ENCODE measurements at regions of chr5 and their contacts with region 1.

Region 1: DNA sequence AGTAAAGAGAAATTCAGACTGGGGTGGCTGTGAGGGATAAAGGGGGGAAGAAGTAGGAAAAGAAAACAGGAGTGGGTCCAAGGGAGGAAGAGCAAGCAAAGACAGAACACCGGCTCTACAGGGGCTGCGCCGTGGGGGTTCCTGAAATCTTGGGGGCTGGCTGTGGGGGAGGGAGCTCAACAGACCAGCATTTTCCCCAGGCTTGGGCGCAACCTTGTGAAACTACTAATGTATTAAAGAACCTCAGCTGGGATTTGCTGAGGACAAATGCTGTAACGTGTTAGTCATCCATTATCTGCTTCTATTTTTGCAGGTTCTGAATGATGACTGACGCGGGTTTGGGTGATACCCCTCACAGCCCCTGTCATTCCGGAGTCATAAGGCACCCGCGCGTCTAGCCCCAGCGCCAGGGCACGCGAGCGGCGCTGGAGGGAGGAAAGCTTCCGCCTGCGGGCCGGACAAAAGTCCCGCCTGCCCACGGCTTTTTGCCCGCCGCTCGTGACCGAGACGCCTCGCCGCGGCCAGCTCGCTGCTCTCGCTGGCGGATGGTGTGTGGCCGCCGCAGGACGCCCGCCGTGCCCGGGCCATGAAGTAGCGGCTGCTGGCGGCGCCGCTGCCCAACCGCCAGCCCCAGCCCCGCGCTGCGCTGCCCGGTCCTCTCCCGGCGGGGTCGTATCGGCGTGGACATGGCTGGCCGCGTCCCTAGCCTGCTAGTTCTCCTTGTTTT is 110.6 kb downstream of the PAM start:
- DNase-seq: peak; percentile 82 to 90 (median 87)
- ATAC-seq: peak; percentile 90 to 97 (median 96)
- H3K4me3 ChIP-seq: peak overlapping the region; percentile 45 to 85 (median 74)
- H3K27ac ChIP-seq: peak overlapping the region; percentile 85 to 95 (median 93)
- H3K4me1 ChIP-seq: peaks cover 0 to 57% (median 20%) of the 10 kb centered on the region in 12 donors
- H3K27me3 ChIP-seq: no peaks in the 10 kb centered on the region
- CTCF ChIP-seq: peak in 1 of 12 donors; percentile 4
- POLR2A ChIP-seq: peak in 1 of 2 donors; percentile 90

Region 2: GRCh38 chr5:102754767-102755431 is 110.8 kb before region 1 on chr5 and contains the start of gene PAM:
- intact Hi-C with region 1: loop called in 1 of 10 experiments (anchors 10 kb)
- DNase-seq: peak; percentile 85 to 92 (median 87)
- ATAC-seq: peak; percentile 85 to 95 (median 94)
- H3K4me3 ChIP-seq: peak within 1 kb of the TSS; percentile 56 to 97 (median 82)
- H3K27ac ChIP-seq: peak within 1 kb of the TSS; percentile 47 to 94 (median 85)
- H3K4me1 ChIP-seq: peaks cover 0 to 44% (median 25%) of the 10 kb centered on the region in 12 donors
- H3K27me3 ChIP-seq: no peaks in the 10 kb centered on the region
- CTCF ChIP-seq: peak in 1 of 12 donors; percentile 9
- POLR2A ChIP-seq: peak in 1 of 2 donors; percentile 53
- total RNA-seq, gene PAM: 578 to 1,548 (median 1,139) TPM

Region 3: DNA sequence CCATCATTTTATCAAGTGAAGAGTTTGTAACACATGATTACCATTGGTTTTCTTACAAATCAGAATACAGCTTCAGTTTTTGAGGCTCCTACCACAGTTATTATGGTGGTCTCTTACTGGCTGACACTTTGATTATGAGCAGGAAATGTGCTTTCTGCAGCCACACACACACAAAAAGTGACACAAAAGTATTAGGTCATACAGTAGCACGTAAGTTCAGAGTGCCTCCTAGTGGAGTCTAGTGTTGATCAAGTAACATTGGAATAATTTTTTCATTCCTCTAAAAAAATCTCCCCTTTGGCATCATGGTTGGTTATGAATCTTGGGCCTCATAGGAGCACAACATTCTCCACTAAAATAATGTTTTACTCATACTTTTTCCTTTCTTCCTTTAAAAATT is 73.0 kb before region 1 on chr5:
- intact Hi-C with region 1: loop called in 7 of 10 experiments (anchors 5 to 10 kb)
- DNase-seq: no peak
- ATAC-seq: no peak
- H3K4me3 ChIP-seq: no peak overlapping the region
- H3K27ac ChIP-seq: no peak overlapping the region
- H3K4me1 ChIP-seq: peaks cover 0 to 56% (median 29%) of the 10 kb centered on the region in 12 donors
- H3K27me3 ChIP-seq: no peaks in the 10 kb centered on the region
- CTCF ChIP-seq: peak in 7 of 12 donors; percentile 19 to 47 (median 30)
- POLR2A ChIP-seq: no peak

Region 4: GRCh38 chr5:102922799-102923477 is 57.3 kb after region 1 on chr5:
- intact Hi-C with region 1: loop called in 1 of 10 experiments (anchors 10 kb)
- DNase-seq: no peak
- ATAC-seq: peak in 2 of 4 donors; percentile 29 to 45
- H3K4me3 ChIP-seq: no peak overlapping the region
- H3K27ac ChIP-seq: peak overlapping the region in 3 of 12 donors; percentile 7 to 42 (median 12)
- H3K4me1 ChIP-seq: peaks cover 0 to 42% (median 20%) of the 10 kb centered on the region in 12 donors
- H3K27me3 ChIP-seq: no peaks in the 10 kb centered on the region
- CTCF ChIP-seq: no peak
- POLR2A ChIP-seq: no peak

Region 5: GRCh38 chr5:102937916-102938315 is 72.2 kb after region 1 on chr5:
- intact Hi-C with region 1: loop called in 1 of 10 experiments (anchors 5 kb)
- DNase-seq: no peak
- ATAC-seq: no peak
- H3K4me3 ChIP-seq: no peak overlapping the region
- H3K27ac ChIP-seq: peak overlapping the region in 1 of 12 donors; percentile 4
- H3K4me1 ChIP-seq: peaks cover 0 to 30% (median 3%) of the 10 kb centered on the region in 12 donors
- H3K27me3 ChIP-seq: no peaks in the 10 kb centered on the region
- CTCF ChIP-seq: no peak
- POLR2A ChIP-seq: no peak